HEK293 (cell line): ENCODE measurements at regions of chr15 and their contacts with region 1.

Region 1: GRCh38 chr15:75928680-75929608 is 25.3 kb downstream of the FBXO22 start:
- H3K4me3 ChIP-seq: no peak overlapping the region
- H3K27ac ChIP-seq: no peak overlapping the region
- H3K4me1 ChIP-seq: peaks cover 9% of the 10 kb centered on the region
- CTCF ChIP-seq: no peak

Region 2: GRCh38 chr15:75565062-75565970 is 363.6 kb before region 1 on chr15:
- CTCF ChIA-PET with region 1: no interaction called
- POLR2A ChIA-PET with region 1: no interaction called
- H3K4me3 ChIP-seq: no peak overlapping the region
- H3K27ac ChIP-seq: no peak overlapping the region
- H3K4me1 ChIP-seq: peaks cover 4% of the 10 kb centered on the region; the same call in 1 of the 2 replicates
- CTCF ChIP-seq: no peak

Region 3: DNA sequence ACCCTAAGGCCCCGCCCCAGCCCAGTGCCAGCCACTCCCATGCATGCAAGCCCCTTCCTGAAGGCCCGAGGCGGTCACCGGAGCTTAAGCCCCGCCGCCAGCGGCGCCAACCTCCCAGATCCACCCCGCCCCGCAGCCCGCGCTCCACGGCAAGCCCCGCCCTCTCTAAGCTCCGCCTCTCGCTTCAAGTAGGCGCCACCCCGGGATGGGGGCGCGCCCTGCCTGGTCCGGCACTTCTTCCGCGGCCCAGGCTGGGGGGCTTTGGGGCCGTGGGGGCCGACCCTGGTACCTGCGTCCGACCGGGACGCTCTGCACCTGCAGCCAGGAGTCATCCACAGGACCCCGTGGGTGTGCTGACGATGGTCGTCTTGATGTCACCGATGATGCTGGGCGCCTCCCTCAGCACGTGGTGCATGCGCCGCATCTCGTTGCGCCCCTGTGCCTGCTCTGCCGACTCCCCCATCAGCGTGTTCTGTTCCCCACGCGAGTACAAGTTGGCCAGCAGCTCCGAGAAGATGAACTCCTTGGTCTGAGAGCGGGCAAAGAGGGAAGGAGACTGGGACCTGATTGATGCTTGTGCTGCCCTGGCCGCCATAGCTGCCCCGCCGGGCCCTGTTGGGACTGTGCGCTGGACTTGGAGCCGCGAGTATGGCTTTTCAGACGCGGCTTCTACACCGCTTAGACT is 190.2 kb before region 1 on chr15:
- CTCF ChIA-PET with region 1: no interaction called
- POLR2A ChIA-PET with region 1: no interaction called
- H3K4me3 ChIP-seq: peak overlapping the region; percentile 66
- H3K27ac ChIP-seq: no peak overlapping the region; the same call in 1 of the 2 replicates
- H3K4me1 ChIP-seq: no peaks in the 10 kb centered on the region
- CTCF ChIP-seq: 0 out of 2 replicates have a peak, but pooled peaks have one; percentile 16

Region 4: GRCh38 chr15:75809986-75810750 is 118.8 kb before region 1 on chr15:
- CTCF ChIA-PET with region 1: interaction called, 51 read pairs
- POLR2A ChIA-PET with region 1: no interaction called
- H3K4me3 ChIP-seq: no peak overlapping the region
- H3K27ac ChIP-seq: no peak overlapping the region
- H3K4me1 ChIP-seq: no peaks in the 10 kb centered on the region
- CTCF ChIP-seq: peak; percentile 42; the same call in 1 of the 2 replicates

Region 5: GRCh38 chr15:75916978-75917377 is 12.0 kb before region 1 on chr15:
- CTCF ChIA-PET with region 1: interaction called, 17 read pairs
- POLR2A ChIA-PET with region 1: no interaction called
- H3K4me3 ChIP-seq: no peak overlapping the region
- H3K27ac ChIP-seq: no peak overlapping the region
- H3K4me1 ChIP-seq: peaks cover 3% of the 10 kb centered on the region; the same call in 1 of the 2 replicates
- CTCF ChIP-seq: no peak

Region 6: DNA sequence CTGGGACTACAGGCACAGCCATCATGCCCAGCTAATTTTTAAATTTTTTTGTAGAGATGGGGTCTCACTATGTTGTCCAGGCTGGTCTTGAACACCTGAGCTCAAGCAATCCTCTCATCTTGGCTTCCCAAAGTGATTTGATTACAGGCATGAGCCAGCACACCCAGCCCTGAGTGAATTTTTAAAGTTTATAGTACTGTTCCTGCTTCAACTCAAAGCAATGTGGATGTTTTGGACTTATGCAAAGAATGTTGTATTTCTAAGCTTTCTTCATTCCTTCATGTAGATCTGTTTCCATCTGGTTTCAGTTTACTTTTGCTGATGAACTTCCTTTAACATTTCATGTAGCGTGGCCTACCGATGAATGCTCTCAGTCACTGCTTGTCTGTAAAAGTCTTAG is 60.0 kb after region 1 on chr15:
- CTCF ChIA-PET with region 1: no interaction called
- POLR2A ChIA-PET with region 1: no interaction called
- H3K4me3 ChIP-seq: no peak overlapping the region
- H3K27ac ChIP-seq: no peak overlapping the region
- H3K4me1 ChIP-seq: no peaks in the 10 kb centered on the region
- CTCF ChIP-seq: no peak

Region 7: DNA sequence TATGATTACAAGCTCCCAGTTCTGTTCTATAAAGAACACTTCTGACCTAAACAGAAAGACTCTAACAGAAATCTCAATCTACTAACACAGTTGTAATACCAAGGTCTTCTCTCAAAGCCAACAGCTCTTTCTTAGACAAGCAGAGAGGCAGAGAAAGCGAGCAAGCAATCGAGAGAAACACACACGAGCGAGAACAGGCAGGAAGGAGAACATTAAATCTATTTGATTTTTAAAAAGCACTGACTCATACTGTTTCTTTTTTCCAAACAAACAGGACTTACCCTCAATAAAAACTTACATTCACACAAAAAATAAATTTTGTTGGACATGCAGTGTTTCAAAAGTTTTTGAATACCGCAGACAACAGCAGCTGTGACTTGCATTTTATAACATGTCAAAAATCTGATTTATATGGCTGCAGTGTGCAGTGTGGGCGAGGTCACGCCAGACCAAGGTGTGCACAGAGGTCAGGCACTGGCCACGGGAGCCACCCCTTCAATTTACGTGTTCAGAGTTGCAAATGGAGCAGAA is 83.1 kb after region 1 on chr15 and contains the start of gene NRG4:
- CTCF ChIA-PET with region 1: interaction called, 11 read pairs
- POLR2A ChIA-PET with region 1: no interaction called
- H3K4me3 ChIP-seq: peak within 1 kb of the TSS; percentile 8
- H3K27ac ChIP-seq: no peak within 1 kb of the TSS
- H3K4me1 ChIP-seq: no peaks in the 10 kb centered on the region
- CTCF ChIP-seq: no peak